ENCODE measurements at regions of chr11 and their contacts with region 1.

Region 1: GRCh38 chr11:67507864-67508485 is at the start of gene CDK2AP2:
- DNase-seq: peak; percentile 99
- H3K4me3 ChIP-seq: peak within 1 kb of the TSS; percentile 52 to 62 (median 53)
- H3K27ac ChIP-seq: peak within 1 kb of the TSS; percentile 83
- H3K4me1 ChIP-seq: peaks cover 36% of the 10 kb centered on the region
- H3K27me3 ChIP-seq: no peaks in the 10 kb centered on the region
- CTCF ChIP-seq: no peak
- POLR2A ChIP-seq: peak; percentile 79
- total RNA-seq, gene CDK2AP2: 81.2 and 97.0 TPM in 2 replicates

Region 2: GRCh38 chr11:67353317-67354074 is 154.5 kb before region 1 on chr11 and contains the start of gene POLD4:
- CTCF ChIA-PET with region 1: interaction called, 4 read pairs
- POLR2A ChIA-PET with region 1: no interaction called
- dilution Hi-C with region 1: no loop called
- intact Hi-C with region 1: loop called (anchors 1 kb)
- DNase-seq: peak; percentile 97
- H3K4me3 ChIP-seq: peak within 1 kb of the TSS; percentile 19 to 76 (median 53)
- H3K27ac ChIP-seq: peak within 1 kb of the TSS; percentile 78
- H3K4me1 ChIP-seq: peaks cover 47% of the 10 kb centered on the region
- H3K27me3 ChIP-seq: no peaks in the 10 kb centered on the region
- CTCF ChIP-seq: no peak
- POLR2A ChIP-seq: peak; percentile 95
- total RNA-seq, gene POLD4: 50.1 and 66.9 TPM in 2 replicates

Region 3: DNA sequence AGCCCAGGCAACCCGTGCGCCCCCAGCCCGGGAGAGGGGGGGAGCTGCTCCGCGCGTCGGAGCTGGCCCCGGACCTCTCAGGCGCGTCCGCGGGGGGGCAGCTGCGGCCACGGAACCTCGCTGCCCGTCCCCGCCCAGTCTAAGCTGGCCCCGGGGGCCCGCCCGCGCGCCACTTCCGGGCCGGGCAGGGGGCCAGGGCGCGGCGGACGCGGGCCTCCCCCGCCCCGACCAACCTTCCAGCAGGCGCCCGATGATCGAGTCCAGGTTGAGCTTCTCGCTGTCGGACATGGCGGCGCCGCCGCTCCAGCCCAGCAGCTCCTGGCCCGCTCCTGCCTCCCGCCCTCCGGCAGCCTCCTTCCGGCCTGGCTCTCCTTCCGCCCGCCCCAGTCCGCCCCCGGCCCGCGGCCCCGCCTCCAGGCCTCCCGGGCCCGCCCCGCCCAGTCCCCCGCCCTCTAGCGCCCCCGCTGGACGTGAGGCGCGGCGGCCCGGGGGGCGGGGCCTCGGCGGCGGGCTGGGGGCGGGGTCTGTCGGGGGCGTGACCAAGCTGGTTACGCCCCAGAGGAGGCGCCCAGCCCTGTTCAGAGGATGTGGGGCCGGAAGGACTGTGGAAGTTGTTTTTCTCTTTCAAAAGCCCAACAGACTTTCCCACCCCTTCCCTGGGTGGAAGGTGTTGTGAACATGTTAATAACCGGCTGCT is 106.3 kb before region 1 on chr11 and contains the start of gene PPP1CA:
- CTCF ChIA-PET with region 1: interaction called, 20 read pairs
- POLR2A ChIA-PET with region 1: no interaction called
- dilution Hi-C with region 1: no loop called
- intact Hi-C with region 1: loop called (anchors 1 kb)
- DNase-seq: peak; percentile 85
- H3K4me3 ChIP-seq: peak within 1 kb of the TSS; percentile 79 to 89 (median 89)
- H3K27ac ChIP-seq: peak within 1 kb of the TSS; percentile 81
- H3K4me1 ChIP-seq: peaks cover 18% of the 10 kb centered on the region
- H3K27me3 ChIP-seq: no peaks in the 10 kb centered on the region
- CTCF ChIP-seq: peak in 1 of 2 donors; percentile 26
- POLR2A ChIP-seq: peak; percentile 90
- total RNA-seq, gene PPP1CA: 192 and 202 TPM in 2 replicates

Region 4: DNA sequence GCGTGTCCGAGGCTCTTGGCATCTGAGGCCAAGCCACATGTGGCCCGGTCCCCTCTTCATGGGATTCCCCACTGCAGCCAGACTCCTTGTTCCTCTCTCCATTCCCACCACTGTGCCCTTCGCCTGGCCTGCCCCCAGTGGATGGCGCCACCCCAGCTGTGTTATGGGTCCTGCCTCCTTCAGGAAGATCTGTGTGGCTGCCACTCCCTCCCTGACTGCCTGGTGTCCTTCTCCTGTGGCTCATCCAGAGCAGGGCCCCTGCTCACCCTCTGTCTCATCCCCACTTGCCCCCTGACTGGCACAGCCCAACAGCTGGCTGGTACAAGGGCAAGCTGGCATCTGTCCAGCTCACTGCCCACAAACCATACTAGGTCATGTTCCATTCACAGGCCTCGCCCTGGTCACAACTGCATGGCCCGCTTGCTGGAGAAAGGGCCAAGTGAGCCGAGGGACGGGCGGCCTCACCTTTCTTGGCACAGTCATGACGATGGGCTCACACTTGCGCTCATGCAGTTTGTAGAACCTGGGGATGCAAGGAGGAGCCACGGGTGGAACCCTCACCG is 68.6 kb before region 1 on chr11:
- CTCF ChIA-PET with region 1: no interaction called
- POLR2A ChIA-PET with region 1: no interaction called
- dilution Hi-C with region 1: no loop called
- intact Hi-C with region 1: loop called (anchors 2 kb)
- DNase-seq: peak; percentile 8
- H3K4me3 ChIP-seq: no peak overlapping the region
- H3K27ac ChIP-seq: no peak overlapping the region
- H3K4me1 ChIP-seq: peaks cover 6% of the 10 kb centered on the region
- H3K27me3 ChIP-seq: no peaks in the 10 kb centered on the region
- CTCF ChIP-seq: peak in 1 of 2 donors; percentile 13
- POLR2A ChIP-seq: peak; percentile 13

Region 5: DNA sequence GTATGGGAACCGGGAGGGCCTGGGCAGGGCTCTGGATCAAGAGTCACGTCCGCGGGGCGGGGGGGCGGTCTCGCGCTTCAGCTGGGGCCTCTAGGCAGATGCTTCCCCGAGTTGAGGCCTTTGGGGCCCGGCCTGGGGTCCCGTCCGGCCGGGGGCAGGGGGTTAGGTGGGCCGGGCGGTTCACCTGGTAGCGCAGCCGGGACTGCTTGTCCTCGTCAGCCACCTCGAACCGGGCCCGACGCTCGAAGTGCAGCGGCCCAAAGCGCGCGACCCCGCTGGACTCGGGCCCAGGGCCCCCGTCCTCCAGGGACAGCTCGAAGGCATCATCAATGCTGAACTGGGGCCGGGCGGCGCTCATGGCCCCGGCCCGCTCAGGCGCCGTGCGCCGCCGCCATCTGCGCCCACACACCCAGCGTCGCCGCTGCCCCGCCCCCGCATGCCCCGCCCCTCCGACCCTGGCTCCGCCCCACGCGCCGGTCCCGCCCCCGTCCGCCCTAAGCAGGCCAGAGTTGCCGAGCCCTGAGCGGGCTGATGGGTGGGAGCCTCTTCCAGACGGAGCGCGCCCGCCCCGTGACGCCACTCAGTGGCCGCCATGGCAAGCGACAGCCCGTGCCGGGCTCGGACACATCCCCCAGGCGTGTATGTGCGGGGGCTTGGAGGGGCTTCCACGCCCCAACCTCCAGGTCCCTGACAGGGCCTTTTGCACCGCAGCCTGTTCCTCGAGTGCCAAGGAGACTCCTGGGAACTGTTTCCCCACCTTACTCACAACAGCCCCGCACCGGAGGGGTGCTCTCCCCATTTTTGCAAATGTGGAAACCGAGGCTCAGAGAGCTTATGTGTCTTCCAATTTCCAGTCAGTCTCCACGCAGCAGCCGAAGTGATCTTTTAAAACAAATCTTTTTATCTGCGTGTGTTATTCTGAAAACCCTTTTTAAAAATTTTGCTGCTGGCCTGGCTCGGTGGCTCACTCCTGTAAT is 38.9 kb before region 1 on chr11 and contains the start of gene TMEM134:
- CTCF ChIA-PET with region 1: no interaction called
- POLR2A ChIA-PET with region 1: no interaction called
- dilution Hi-C with region 1: no loop called
- intact Hi-C with region 1: loop called (anchors 1 kb)
- DNase-seq: peak; percentile 88
- H3K4me3 ChIP-seq: peak within 1 kb of the TSS; percentile 64 to 79 (median 73)
- H3K27ac ChIP-seq: peak within 1 kb of the TSS; percentile 37
- H3K4me1 ChIP-seq: peaks cover 14% of the 10 kb centered on the region
- H3K27me3 ChIP-seq: no peaks in the 10 kb centered on the region
- CTCF ChIP-seq: peak; percentile 27 to 65
- POLR2A ChIP-seq: peak; percentile 90
- total RNA-seq, gene TMEM134: 33.4 and 41.6 TPM in 2 replicates

Region 6: GRCh38 chr11:67534070-67534679 is 26.2 kb after region 1 on chr11:
- CTCF ChIA-PET with region 1: no interaction called
- POLR2A ChIA-PET with region 1: no interaction called
- dilution Hi-C with region 1: no loop called
- intact Hi-C with region 1: no loop called
- DNase-seq: no peak
- H3K4me3 ChIP-seq: no peak overlapping the region
- H3K27ac ChIP-seq: no peak overlapping the region
- H3K4me1 ChIP-seq: no peaks in the 10 kb centered on the region
- H3K27me3 ChIP-seq: no peaks in the 10 kb centered on the region
- CTCF ChIP-seq: no peak
- POLR2A ChIP-seq: no peak

Region 7: GRCh38 chr11:67563354-67564114 is 55.6 kb after region 1 on chr11:
- CTCF ChIA-PET with region 1: no interaction called
- POLR2A ChIA-PET with region 1: no interaction called
- dilution Hi-C with region 1: no loop called
- intact Hi-C with region 1: loop called (anchors 1 kb)
- DNase-seq: peak; percentile 94
- H3K4me3 ChIP-seq: no peak overlapping the region
- H3K27ac ChIP-seq: peak overlapping the region; percentile 94
- H3K4me1 ChIP-seq: peaks cover 15% of the 10 kb centered on the region
- H3K27me3 ChIP-seq: no peaks in the 10 kb centered on the region
- CTCF ChIP-seq: no peak
- POLR2A ChIP-seq: peak; percentile 40

Region 8: GRCh38 chr11:67606492-67607201 is 98.7 kb after region 1 on chr11 and contains the start of gene NDUFV1:
- CTCF ChIA-PET with region 1: no interaction called
- POLR2A ChIA-PET with region 1: no interaction called
- dilution Hi-C with region 1: no loop called
- intact Hi-C with region 1: loop called (anchors 1 kb)
- DNase-seq: peak; percentile 94
- H3K4me3 ChIP-seq: peak within 1 kb of the TSS; percentile 32 to 92 (median 61)
- H3K27ac ChIP-seq: peak within 1 kb of the TSS; percentile 25
- H3K4me1 ChIP-seq: peaks cover 6% of the 10 kb centered on the region
- H3K27me3 ChIP-seq: no peaks in the 10 kb centered on the region
- CTCF ChIP-seq: peak; percentile 48 to 78
- POLR2A ChIP-seq: peak; percentile 88
- total RNA-seq, gene NDUFV1: 179 and 191 TPM in 2 replicates